SK-N-SH (cell line): ENCODE measurements at regions of chr6 and their contacts with region 1.

Region 1: DNA sequence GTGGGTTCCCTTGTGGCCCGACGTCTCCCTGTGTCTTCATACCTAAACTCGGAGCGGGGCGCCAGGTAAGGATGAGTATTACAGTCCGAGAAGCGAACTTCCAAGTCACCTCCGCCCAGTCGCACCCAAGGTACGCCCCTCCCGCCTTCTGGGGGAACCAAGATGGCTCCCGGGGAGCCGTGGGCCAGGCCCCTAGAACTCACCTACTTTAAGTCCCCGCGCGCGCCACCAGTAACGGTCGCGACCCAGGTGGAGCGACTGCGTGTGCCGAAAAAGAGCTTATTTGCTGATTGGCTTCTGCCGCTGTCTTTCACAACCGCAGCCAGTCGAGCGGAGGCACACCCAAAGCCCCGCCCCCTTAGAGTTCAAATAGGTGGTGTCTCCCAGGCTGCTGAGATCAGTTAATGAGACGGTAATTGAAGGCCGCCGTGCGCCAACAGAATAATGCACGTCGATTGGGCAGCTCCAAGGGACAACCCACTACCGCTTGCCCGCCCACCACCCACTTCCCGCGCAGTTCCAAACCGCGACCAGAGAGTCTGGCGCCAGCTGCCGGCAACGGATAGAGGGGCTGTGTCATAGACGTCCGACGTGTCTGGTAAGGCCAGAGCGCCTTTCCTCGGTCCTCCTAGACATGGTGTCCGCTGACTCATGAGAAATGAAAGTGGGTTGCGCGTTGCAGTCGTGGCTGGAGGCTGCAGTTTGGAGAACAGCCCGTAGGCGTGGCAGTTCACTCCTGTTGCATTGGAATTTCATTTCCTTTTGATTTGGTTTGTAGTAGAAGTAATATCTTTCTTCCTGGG is at the start of gene MDC1:
- DNase-seq: peak; percentile 91
- H3K4me3 ChIP-seq: peak within 1 kb of the TSS; percentile 72 to 82
- H3K27ac ChIP-seq: peak within 1 kb of the TSS; percentile 92 to 93
- H3K4me1 ChIP-seq: peaks cover 15 to 18% of the 10 kb centered on the region in 2 experiments; a peak in 3 of 4 replicates
- H3K27me3 ChIP-seq: no peaks in the 10 kb centered on the region
- CTCF ChIP-seq: peak; percentile 28
- EP300 ChIP-seq: peak; percentile 45 to 66; a peak in 2 of 4 replicates
- RAD21 ChIP-seq: 0 out of 2 replicates have a peak, but pooled peaks have one; percentile 16
- polyA plus RNA-seq, gene MDC1: 5.9 and 10.4 TPM in 2 replicates

Region 2: GRCh38 chr6:30500421-30501355 is 216.6 kb before region 1 on chr6:
- CTCF ChIA-PET with region 1: no interaction called
- POLR2A ChIA-PET with region 1: no interaction called
- DNase-seq: no peak
- H3K4me3 ChIP-seq: no peak overlapping the region
- H3K27ac ChIP-seq: no peak overlapping the region
- H3K4me1 ChIP-seq: peaks cover 0 to 14% of the 10 kb centered on the region in 2 experiments; a peak in 1 of 4 replicates
- H3K27me3 ChIP-seq: no peaks in the 10 kb centered on the region
- CTCF ChIP-seq: no peak
- EP300 ChIP-seq: no peak
- RAD21 ChIP-seq: no peak

Region 3: DNA sequence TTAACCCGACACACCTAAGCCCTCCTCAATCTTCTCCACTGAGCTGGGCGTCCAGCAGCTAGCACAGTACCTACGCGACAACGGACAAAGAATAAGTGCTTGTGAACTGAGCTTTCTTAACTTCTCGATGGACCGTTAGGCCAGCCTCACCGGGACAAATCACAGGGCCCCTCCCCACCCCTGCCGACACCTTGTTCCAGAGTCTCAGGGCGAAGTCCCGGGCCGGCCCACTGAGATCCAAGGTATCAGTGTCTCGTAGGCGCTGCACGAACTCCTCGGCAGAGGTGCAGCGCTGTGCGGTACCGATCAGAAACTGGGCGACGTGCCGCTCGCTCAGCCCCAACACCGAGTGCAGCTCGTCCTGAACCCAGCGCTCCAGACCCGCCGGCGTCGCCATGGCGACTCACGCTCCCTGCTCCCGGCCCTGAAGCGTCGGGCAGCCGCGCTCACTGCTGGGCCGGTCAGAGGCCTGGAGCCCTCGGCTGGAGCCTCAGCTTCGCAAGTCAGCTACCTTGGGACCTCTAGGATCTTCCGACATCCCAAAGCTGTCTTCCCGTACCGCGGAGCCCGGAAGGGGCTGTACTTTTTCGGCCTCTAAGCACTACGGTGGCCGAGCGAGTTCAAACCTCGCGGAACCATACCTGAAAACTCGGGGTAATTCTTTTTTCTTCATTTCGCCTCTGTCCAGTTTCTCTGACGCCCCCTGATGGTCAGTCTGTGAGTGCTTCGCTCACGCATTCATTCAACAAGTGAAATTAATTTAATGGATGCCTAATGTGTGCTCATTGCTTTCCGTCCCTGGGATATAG is 44.6 kb before region 1 on chr6 and contains the start of gene DHX16:
- CTCF ChIA-PET with region 1: interaction called, 838 read pairs
- POLR2A ChIA-PET with region 1: interaction called, 4 read pairs
- DNase-seq: peak; percentile 92
- H3K4me3 ChIP-seq: peak within 1 kb of the TSS; percentile 87 to 99
- H3K27ac ChIP-seq: peak within 1 kb of the TSS; percentile 60 to 66
- H3K4me1 ChIP-seq: peaks cover 0 to 5% of the 10 kb centered on the region in 2 experiments; a peak in 3 of 4 replicates
- H3K27me3 ChIP-seq: no peaks in the 10 kb centered on the region
- CTCF ChIP-seq: peak; percentile 96
- EP300 ChIP-seq: peak; percentile 31 to 34; a peak in 2 of 4 replicates
- RAD21 ChIP-seq: peak; percentile 66
- polyA plus RNA-seq, gene DHX16: 59.8 and 63.3 TPM in 2 replicates

Region 4: DNA sequence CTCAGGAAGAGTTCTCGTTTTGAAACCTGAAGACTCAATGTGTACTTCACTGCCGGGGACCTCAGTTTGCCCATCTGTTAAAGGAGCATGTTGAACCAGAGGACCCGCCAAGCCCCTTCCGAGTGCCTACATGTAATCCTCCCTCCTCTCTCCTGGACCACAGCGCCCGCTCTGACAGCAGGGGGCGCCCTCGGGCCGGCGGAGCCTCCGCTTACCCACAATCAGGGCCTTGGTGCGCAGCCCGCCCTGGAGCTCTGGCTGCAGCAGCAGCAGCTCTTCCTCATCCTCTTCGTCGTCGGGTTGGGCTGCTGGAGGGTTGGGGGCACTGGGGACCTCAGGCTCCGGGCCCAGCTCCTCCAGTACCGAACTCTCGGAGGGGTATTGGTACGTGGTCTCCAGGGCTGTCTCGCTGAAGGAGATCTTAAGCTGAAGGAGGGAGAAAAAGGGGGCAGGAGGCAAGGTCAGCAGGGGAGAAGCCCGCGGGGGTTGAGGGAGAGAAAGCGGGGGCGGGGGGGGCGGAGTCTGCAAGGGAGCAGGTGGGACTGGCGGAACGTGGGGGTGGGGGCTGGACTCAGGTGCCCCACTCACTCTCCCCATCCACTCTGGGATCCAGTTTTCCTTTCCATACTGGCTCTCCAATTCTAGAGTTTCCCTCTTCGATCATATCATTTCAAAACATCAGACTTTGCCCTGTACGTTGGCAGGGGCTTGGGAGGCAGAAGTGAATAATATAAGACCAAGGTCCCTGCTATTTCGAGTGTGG is 38.1 kb before region 1 on chr6:
- CTCF ChIA-PET with region 1: interaction called, 838 read pairs
- POLR2A ChIA-PET with region 1: interaction called, 24 read pairs
- DNase-seq: peak; percentile 90
- H3K4me3 ChIP-seq: peak overlapping the region in 1 of 2 experiments; percentile 32; a peak in 1 of 4 replicates
- H3K27ac ChIP-seq: peak overlapping the region in 1 of 2 experiments; percentile 16; a peak in 2 of 4 replicates
- H3K4me1 ChIP-seq: peaks cover 16 to 38% of the 10 kb centered on the region in 2 experiments; a peak in 3 of 4 replicates
- H3K27me3 ChIP-seq: no peaks in the 10 kb centered on the region
- CTCF ChIP-seq: peak; percentile 92
- EP300 ChIP-seq: no peak
- RAD21 ChIP-seq: peak; percentile 88

Region 5: GRCh38 chr6:30686908-30687658 is 30.2 kb before region 1 on chr6:
- CTCF ChIA-PET with region 1: interaction called, 838 read pairs
- POLR2A ChIA-PET with region 1: interaction called, 10 read pairs
- DNase-seq: peak; percentile 93
- H3K4me3 ChIP-seq: peak overlapping the region; percentile 74 to 77
- H3K27ac ChIP-seq: peak overlapping the region; percentile 93 to 97
- H3K4me1 ChIP-seq: peaks cover 17 to 66% of the 10 kb centered on the region in 2 experiments; a peak in 2 of 4 replicates
- H3K27me3 ChIP-seq: no peaks in the 10 kb centered on the region
- CTCF ChIP-seq: no peak
- EP300 ChIP-seq: peak in 1 of 2 experiments; percentile 43; a peak in 1 of 4 replicates
- RAD21 ChIP-seq: no peak

Region 6: DNA sequence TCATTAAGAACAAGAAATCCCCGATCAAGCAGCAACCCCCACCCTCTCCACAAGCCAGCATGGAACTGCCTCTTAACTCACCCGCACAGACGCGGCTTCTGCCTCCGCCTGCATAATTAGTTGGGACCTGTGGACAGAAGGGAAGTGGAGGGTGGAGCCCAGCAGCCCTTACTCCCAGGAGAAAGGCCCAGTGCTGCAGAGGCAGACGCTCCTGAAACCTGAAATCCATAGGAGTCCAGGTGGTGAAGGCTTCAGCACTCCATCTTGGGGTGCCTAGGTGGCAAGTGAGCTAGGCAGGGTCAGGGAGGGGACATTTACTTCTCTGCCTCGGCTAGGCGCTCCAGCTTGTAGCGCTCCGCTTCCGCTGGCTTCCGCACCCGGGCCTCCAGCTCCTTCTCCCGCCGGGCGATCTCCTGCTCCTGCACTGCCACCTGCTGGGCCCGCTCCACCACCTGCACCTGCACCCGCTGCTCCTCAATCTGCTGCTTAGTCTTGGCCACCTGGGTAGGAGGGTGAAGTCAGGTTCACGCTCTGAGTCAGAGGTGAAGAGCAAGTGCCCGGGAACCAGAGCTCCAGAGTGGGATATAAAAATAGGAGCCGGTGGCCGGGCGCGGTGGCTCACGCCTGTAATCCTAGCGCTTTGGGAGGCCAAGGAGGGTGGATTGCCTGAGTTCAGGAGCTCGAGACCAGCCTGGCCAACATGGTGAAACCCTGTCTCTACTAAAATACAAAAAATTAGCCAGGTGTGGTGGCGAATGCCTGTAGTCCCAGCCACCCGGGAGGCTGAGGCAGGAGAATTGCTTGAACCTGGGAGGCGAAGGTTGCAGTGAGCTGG is 13.6 kb after region 1 on chr6:
- CTCF ChIA-PET with region 1: interaction called, 73 read pairs
- POLR2A ChIA-PET with region 1: interaction called, 5 read pairs
- DNase-seq: peak; percentile 77
- H3K4me3 ChIP-seq: no peak overlapping the region
- H3K27ac ChIP-seq: peak overlapping the region in 1 of 2 experiments; percentile 62; a peak in 2 of 4 replicates
- H3K4me1 ChIP-seq: peaks cover 0 to 3% of the 10 kb centered on the region in 2 experiments; a peak in 1 of 4 replicates
- H3K27me3 ChIP-seq: no peaks in the 10 kb centered on the region
- CTCF ChIP-seq: peak; percentile 51
- EP300 ChIP-seq: no peak
- RAD21 ChIP-seq: peak; percentile 67

Region 7: DNA sequence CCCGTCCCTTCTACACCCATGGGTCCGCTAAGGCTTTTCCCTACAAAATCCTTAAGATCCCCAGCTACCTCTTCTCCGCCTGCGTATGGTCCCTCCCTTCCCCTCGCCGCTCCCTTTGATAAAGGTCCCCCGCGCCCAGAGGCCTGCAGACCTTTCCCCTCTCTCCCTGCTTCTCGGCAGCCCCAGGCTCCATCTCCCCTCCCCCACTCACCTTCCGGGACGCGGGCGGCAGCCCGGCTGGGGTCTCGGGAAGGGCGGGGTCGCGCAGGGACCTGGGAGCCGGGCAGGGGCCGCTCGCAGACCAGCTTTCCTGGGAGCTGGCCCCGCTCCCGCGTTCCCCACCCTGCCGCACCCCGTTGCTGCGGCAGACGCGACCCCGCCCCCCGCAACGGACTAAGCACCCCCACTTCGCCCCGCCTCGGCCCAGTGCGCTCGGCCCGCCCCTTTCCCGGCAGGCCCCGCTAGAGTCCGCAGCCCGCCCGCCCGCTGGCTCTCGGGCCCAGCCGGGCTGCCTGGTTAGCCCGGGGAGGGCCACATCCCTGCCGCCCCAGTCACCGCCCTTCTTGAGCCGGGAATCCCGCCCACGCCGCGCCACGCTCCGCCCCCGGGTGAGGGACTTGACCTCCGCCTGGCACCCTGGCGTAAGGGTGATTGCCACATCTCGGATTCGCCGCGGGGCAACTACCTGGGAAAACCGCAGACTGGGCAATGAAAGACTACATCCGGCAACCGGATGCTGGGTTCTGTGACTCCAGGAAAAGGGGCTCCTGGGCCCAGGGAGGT is 25.3 kb after region 1 on chr6 and contains the start of gene FLOT1:
- CTCF ChIA-PET with region 1: interaction called, 73 read pairs
- POLR2A ChIA-PET with region 1: interaction called, 3 read pairs
- DNase-seq: peak; percentile 97
- H3K4me3 ChIP-seq: peak within 1 kb of the TSS; percentile 75 to 76
- H3K27ac ChIP-seq: peak within 1 kb of the TSS; percentile 84 to 95
- H3K4me1 ChIP-seq: peaks cover 21 to 30% of the 10 kb centered on the region in 2 experiments
- H3K27me3 ChIP-seq: no peaks in the 10 kb centered on the region
- CTCF ChIP-seq: no peak
- EP300 ChIP-seq: no peak; a peak in 1 of 4 replicates
- RAD21 ChIP-seq: no peak
- polyA plus RNA-seq, gene FLOT1: 457 and 462 TPM in 2 replicates

Region 8: GRCh38 chr6:30781743-30782424 is 64.6 kb after region 1 on chr6:
- CTCF ChIA-PET with region 1: interaction called, 15 read pairs
- POLR2A ChIA-PET with region 1: no interaction called
- DNase-seq: peak; percentile 86
- H3K4me3 ChIP-seq: peak overlapping the region in 1 of 2 experiments; percentile 31; a peak in 3 of 4 replicates
- H3K27ac ChIP-seq: peak overlapping the region; percentile 95 to 100
- H3K4me1 ChIP-seq: peaks cover 41 to 50% of the 10 kb centered on the region in 2 experiments
- H3K27me3 ChIP-seq: no peaks in the 10 kb centered on the region
- CTCF ChIP-seq: no peak
- EP300 ChIP-seq: peak; percentile 72 to 93
- RAD21 ChIP-seq: no peak; the same call in 1 of the 2 replicates